PC-9 (cell line): ENCODE measurements at regions of chr3 and their contacts with region 1.

Region 1: GRCh38 chr3:170132335-170132734 is 49.2 kb downstream of the PHC3 start:
- DNase-seq: no peak
- H3K4me3 ChIP-seq: no peak overlapping the region
- H3K27ac ChIP-seq: no peak overlapping the region
- H3K4me1 ChIP-seq: no peaks in the 10 kb centered on the region
- H3K27me3 ChIP-seq: no peaks in the 10 kb centered on the region
- CTCF ChIP-seq: no peak

Region 2: DNA sequence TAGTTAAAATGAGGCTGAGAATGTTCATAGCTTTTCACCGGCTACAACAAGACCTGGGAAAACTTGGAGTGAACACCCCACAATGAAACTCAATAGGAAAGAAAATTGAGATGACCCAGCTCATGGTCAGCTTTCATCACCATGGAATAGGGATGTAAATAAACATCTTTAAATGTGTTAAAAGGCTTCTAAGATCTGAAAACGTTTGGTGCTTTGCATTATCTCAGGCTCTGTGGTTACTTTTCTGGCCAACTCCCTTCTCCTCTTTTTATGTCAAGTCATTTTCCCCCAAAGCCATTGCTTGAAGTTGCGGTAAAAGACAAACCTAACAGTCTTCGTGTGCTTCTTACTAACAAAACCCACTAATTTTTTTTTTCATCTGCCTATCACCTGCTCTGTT is 664.6 kb before region 1 on chr3:
- CTCF ChIA-PET with region 1: interaction called, 20 read pairs
- POLR2A ChIA-PET with region 1: no interaction called
- intact Hi-C with region 1: no loop called
- DNase-seq: no peak
- H3K4me3 ChIP-seq: no peak overlapping the region
- H3K27ac ChIP-seq: no peak overlapping the region
- H3K4me1 ChIP-seq: no peaks in the 10 kb centered on the region
- H3K27me3 ChIP-seq: no peaks in the 10 kb centered on the region
- CTCF ChIP-seq: no peak

Region 3: GRCh38 chr3:170159459-170159858 is 27.1 kb after region 1 on chr3:
- CTCF ChIA-PET with region 1: no interaction called
- POLR2A ChIA-PET with region 1: no interaction called
- intact Hi-C with region 1: no loop called
- DNase-seq: no peak
- H3K4me3 ChIP-seq: no peak overlapping the region
- H3K27ac ChIP-seq: no peak overlapping the region
- H3K4me1 ChIP-seq: no peaks in the 10 kb centered on the region
- H3K27me3 ChIP-seq: no peaks in the 10 kb centered on the region
- CTCF ChIP-seq: no peak